CD4-positive, alpha-beta T cell (primary cell): ENCODE measurements at regions of chr20 and their contacts with region 1.

Region 1: GRCh38 chr20:35541783-35542588 is at the start of gene ERGIC3:
- DNase-seq: peak; percentile 95 to 99 (median 96)
- ATAC-seq: peak; percentile 99
- H3K4me3 ChIP-seq: peak within 1 kb of the TSS; percentile 75
- H3K4me3 Mint-ChIP-seq: peak within 1 kb of the TSS; percentile 97
- H3K27ac ChIP-seq: peak within 1 kb of the TSS; percentile 65 to 81
- H3K27ac Mint-ChIP-seq: peak within 1 kb of the TSS; percentile 89
- H3K4me1 ChIP-seq: peaks cover 18% of the 10 kb centered on the region
- H3K4me1 Mint-ChIP-seq: peaks cover 32% of the 10 kb centered on the region
- H3K27me3 ChIP-seq: no peaks in the 10 kb centered on the region
- H3K27me3 Mint-ChIP-seq: no peaks in the 10 kb centered on the region
- CTCF ChIP-seq: no peak
- total RNA-seq, gene ERGIC3: 144 to 146 TPM

Region 2: GRCh38 chr20:34876162-34877001 is 665.6 kb before region 1 on chr20 and contains the start of gene ACSS2:
- CTCF ChIA-PET with region 1: no interaction called
- POLR2A ChIA-PET with region 1: no interaction called
- intact Hi-C with region 1: loop called in 1 of 2 experiments (anchors 5 kb)
- DNase-seq: peak; percentile 91 to 99 (median 94)
- ATAC-seq: peak; percentile 81
- H3K4me3 ChIP-seq: peak within 1 kb of the TSS; percentile 70
- H3K4me3 Mint-ChIP-seq: peak within 1 kb of the TSS; percentile 90
- H3K27ac ChIP-seq: peak within 1 kb of the TSS; percentile 11 to 42
- H3K27ac Mint-ChIP-seq: peak within 1 kb of the TSS; percentile 81
- H3K4me1 ChIP-seq: peaks cover 51% of the 10 kb centered on the region
- H3K4me1 Mint-ChIP-seq: peaks cover 66% of the 10 kb centered on the region
- H3K27me3 ChIP-seq: no peaks in the 10 kb centered on the region
- H3K27me3 Mint-ChIP-seq: no peaks in the 10 kb centered on the region
- CTCF ChIP-seq: no peak
- total RNA-seq, gene ACSS2: 15.6 to 18.8 TPM

Region 3: DNA sequence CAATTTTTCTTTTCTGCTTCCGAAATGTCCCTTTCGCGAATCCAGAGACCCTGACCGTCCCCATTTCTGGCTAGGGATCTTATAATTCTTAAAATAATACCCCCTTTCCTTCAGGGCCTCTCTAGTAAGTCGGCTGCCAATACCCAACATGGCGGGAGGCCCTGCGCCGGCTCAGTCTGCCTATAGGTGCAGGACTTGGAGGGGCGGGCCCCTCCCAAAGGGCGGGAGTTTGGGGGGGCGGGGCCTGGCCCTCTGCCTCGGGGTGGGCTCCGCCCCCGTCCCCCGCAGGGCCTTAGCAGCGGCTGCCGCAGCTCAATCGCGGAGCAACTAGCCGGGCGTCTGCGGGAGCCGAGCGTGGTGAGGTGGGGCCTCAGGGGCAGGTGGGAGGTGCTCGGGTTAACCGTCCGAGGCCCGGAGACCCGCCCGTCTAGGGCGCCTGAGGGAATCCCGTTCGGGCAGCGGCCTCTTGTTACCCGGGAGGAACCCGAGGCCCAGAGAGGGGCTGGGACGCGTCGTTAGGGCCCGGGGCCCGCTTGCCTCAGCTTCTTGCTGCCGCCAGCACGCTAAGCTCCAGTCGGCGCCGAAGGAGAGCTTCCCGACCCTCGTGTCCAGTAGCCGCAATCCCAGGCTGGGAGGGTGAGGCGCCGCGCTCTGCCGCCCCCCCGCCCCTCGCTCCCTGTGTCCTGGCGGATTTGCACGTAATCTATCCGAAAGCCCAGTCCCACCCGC is 86.9 kb before region 1 on chr20 and contains the start of gene CEP250:
- CTCF ChIA-PET with region 1: no interaction called
- POLR2A ChIA-PET with region 1: no interaction called
- intact Hi-C with region 1: loop called in 1 of 2 experiments (anchors 2 kb)
- DNase-seq: peak; percentile 87 to 97 (median 94)
- ATAC-seq: peak; percentile 96
- H3K4me3 ChIP-seq: peak within 1 kb of the TSS; percentile 91
- H3K4me3 Mint-ChIP-seq: peak within 1 kb of the TSS; percentile 97
- H3K27ac ChIP-seq: peak within 1 kb of the TSS; percentile 83 to 94
- H3K27ac Mint-ChIP-seq: peak within 1 kb of the TSS; percentile 87
- H3K4me1 ChIP-seq: peaks cover 19% of the 10 kb centered on the region
- H3K4me1 Mint-ChIP-seq: peaks cover 29% of the 10 kb centered on the region
- H3K27me3 ChIP-seq: no peaks in the 10 kb centered on the region
- H3K27me3 Mint-ChIP-seq: no peaks in the 10 kb centered on the region
- CTCF ChIP-seq: no peak
- total RNA-seq, gene CEP250: 27.6 to 33.1 TPM

Region 4: DNA sequence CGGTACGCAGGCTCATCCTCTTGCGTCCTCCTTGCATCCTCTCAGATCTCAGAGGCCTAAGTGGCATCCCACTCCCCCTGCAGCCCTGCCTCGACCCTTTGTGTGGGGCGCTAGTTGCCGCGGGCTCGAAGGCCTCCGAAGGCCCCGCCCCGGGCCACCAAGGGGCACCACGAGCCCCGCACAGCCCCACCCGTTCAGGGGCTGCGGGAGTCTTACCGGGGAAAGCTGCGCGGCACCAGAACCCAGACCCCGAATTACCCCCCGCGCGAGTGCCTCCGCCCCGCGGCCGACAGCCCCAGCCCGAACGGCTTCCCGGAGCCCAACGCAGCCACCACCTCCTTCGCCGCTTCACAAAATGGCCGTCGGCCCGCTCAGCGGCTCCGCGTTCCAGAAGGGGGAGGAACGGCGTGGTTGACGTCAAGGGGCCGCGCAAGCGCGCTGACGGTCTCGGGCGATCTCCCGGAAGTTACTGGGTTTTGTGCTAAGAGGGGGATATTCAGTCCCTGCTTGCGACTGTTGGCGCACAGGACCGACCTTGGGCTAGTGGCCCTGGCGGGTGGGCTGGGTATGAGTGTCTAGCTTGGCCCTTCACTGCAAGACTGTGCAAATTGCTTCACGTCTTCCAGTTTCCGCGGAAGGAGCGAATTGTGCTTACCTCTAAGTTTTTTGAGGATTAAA is 122.7 kb after region 1 on chr20 and contains the starts of genes CPNE1 and RBM12:
- CTCF ChIA-PET with region 1: no interaction called
- POLR2A ChIA-PET with region 1: interaction called, 18 read pairs
- intact Hi-C with region 1: loop called (anchors 1 to 2 kb)
- DNase-seq: peak; percentile 87 to 97 (median 92)
- ATAC-seq: peak; percentile 67
- H3K4me3 ChIP-seq: peak within 1 kb of the TSS; percentile 97
- H3K4me3 Mint-ChIP-seq: peak within 1 kb of the TSS; percentile 89
- H3K27ac ChIP-seq: peak within 1 kb of the TSS; percentile 99
- H3K27ac Mint-ChIP-seq: peak within 1 kb of the TSS; percentile 99
- H3K4me1 ChIP-seq: peaks cover 37% of the 10 kb centered on the region
- H3K4me1 Mint-ChIP-seq: peaks cover 49% of the 10 kb centered on the region
- H3K27me3 ChIP-seq: no peaks in the 10 kb centered on the region
- H3K27me3 Mint-ChIP-seq: no peaks in the 10 kb centered on the region
- CTCF ChIP-seq: no peak
- total RNA-seq, gene CPNE1: 146 to 153 TPM
- total RNA-seq, gene RBM12: 91.7 to 95.2 TPM

Region 5: GRCh38 chr20:35992713-35993335 is 450.8 kb after region 1 on chr20:
- CTCF ChIA-PET with region 1: no interaction called
- POLR2A ChIA-PET with region 1: no interaction called
- intact Hi-C with region 1: no loop called
- DNase-seq: peak; percentile 2 to 79 (median 32)
- ATAC-seq: peak; percentile 81
- H3K4me3 ChIP-seq: no peak overlapping the region
- H3K4me3 Mint-ChIP-seq: no peak overlapping the region
- H3K27ac ChIP-seq: no peak overlapping the region
- H3K27ac Mint-ChIP-seq: no peak overlapping the region
- H3K4me1 ChIP-seq: peaks cover 7% of the 10 kb centered on the region
- H3K4me1 Mint-ChIP-seq: no peaks in the 10 kb centered on the region
- H3K27me3 ChIP-seq: peaks cover 0 to 3% of the 10 kb centered on the region in 2 experiments
- H3K27me3 Mint-ChIP-seq: peaks cover 5% of the 10 kb centered on the region
- CTCF ChIP-seq: peak; percentile 91

Region 6: GRCh38 chr20:36004045-36004444 is 462.1 kb after region 1 on chr20:
- CTCF ChIA-PET with region 1: no interaction called
- POLR2A ChIA-PET with region 1: no interaction called
- intact Hi-C with region 1: no loop called
- DNase-seq: no peak
- ATAC-seq: no peak
- H3K4me3 ChIP-seq: no peak overlapping the region
- H3K4me3 Mint-ChIP-seq: no peak overlapping the region
- H3K27ac ChIP-seq: no peak overlapping the region
- H3K27ac Mint-ChIP-seq: no peak overlapping the region
- H3K4me1 ChIP-seq: no peaks in the 10 kb centered on the region
- H3K4me1 Mint-ChIP-seq: no peaks in the 10 kb centered on the region
- H3K27me3 ChIP-seq: peaks cover 6 to 7% of the 10 kb centered on the region in 2 experiments
- H3K27me3 Mint-ChIP-seq: peaks cover 16% of the 10 kb centered on the region
- CTCF ChIP-seq: no peak

Region 7: GRCh38 chr20:36235892-36236785 is 694.2 kb after region 1 on chr20 and contains the start of gene AAR2:
- CTCF ChIA-PET with region 1: no interaction called
- POLR2A ChIA-PET with region 1: no interaction called
- intact Hi-C with region 1: loop called in 1 of 2 experiments (anchors 5 kb)
- DNase-seq: peak; percentile 65 to 85 (median 75)
- ATAC-seq: peak; percentile 96
- H3K4me3 ChIP-seq: peak within 1 kb of the TSS; percentile 98
- H3K4me3 Mint-ChIP-seq: peak within 1 kb of the TSS; percentile 95
- H3K27ac ChIP-seq: peak within 1 kb of the TSS; percentile 42 to 76
- H3K27ac Mint-ChIP-seq: peak within 1 kb of the TSS; percentile 83
- H3K4me1 ChIP-seq: peaks cover 36% of the 10 kb centered on the region
- H3K4me1 Mint-ChIP-seq: peaks cover 42% of the 10 kb centered on the region
- H3K27me3 ChIP-seq: no peaks in the 10 kb centered on the region
- H3K27me3 Mint-ChIP-seq: no peaks in the 10 kb centered on the region
- CTCF ChIP-seq: no peak
- total RNA-seq, gene AAR2: 22.5 to 24.3 TPM